ENCODE measurements at regions of chr1 and their contacts with region 1.

Region 1: GRCh38 chr1:208029381-208030287 is 118.7 kb upstream of the CD34 start:
- DNase-seq: no peak
- H3K4me3 ChIP-seq: no peak overlapping the region
- H3K4me3 Mint-ChIP-seq: no peak overlapping the region
- H3K27ac ChIP-seq: no peak overlapping the region
- H3K27ac Mint-ChIP-seq: no peak overlapping the region
- H3K4me1 ChIP-seq: no peaks in the 10 kb centered on the region
- H3K4me1 Mint-ChIP-seq: no peaks in the 10 kb centered on the region
- H3K27me3 ChIP-seq: no peaks in the 10 kb centered on the region
- H3K27me3 Mint-ChIP-seq: peaks cover 0 to 2% (median 0%) of the 10 kb centered on the region in 3 donors
- CTCF ChIP-seq: no peak

Region 2: DNA sequence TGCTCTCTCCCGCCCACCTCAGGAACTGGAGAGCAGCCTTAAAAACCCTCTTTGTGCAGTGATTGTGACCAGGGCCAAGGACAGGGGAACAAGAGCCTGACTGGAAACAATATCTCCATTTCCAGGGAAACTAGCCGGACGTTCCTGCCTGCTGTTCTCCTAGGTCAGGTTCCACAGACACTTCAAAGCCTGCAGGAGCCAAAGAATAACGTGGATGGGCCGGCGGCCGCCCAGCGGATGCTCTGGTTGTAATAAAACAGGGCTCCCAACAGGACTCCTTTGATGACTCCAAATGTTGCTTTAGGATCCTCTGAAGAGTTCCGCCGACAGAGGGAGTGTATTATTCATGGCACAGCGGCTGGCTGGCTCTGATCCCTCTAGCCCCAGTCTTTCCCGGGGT is 52.3 kb after region 1 on chr1:
- intact Hi-C with region 1: no loop called
- DNase-seq: no peak
- H3K4me3 ChIP-seq: no peak overlapping the region
- H3K4me3 Mint-ChIP-seq: no peak overlapping the region
- H3K27ac ChIP-seq: no peak overlapping the region
- H3K27ac Mint-ChIP-seq: peak overlapping the region in 1 of 7 donors; percentile 61
- H3K4me1 ChIP-seq: peaks cover 7 to 11% of the 10 kb centered on the region in 2 donors
- H3K4me1 Mint-ChIP-seq: peaks cover 17% of the 10 kb centered on the region
- H3K27me3 ChIP-seq: no peaks in the 10 kb centered on the region
- H3K27me3 Mint-ChIP-seq: peaks cover 1 to 6% (median 3%) of the 10 kb centered on the region in 3 donors
- CTCF ChIP-seq: no peak

Region 3: GRCh38 chr1:208093754-208094719 is 64.4 kb after region 1 on chr1:
- intact Hi-C with region 1: loop called in 1 of 2 experiments (anchors 10 kb)
- DNase-seq: peak; percentile 33 to 62 (median 50)
- H3K4me3 ChIP-seq: no peak overlapping the region
- H3K4me3 Mint-ChIP-seq: no peak overlapping the region
- H3K27ac ChIP-seq: no peak overlapping the region
- H3K27ac Mint-ChIP-seq: peak overlapping the region in 3 of 7 donors; percentile 13 to 47 (median 30)
- H3K4me1 ChIP-seq: no peaks in the 10 kb centered on the region
- H3K4me1 Mint-ChIP-seq: no peaks in the 10 kb centered on the region
- H3K27me3 ChIP-seq: no peaks in the 10 kb centered on the region
- H3K27me3 Mint-ChIP-seq: peaks cover 0 to 6% (median 3%) of the 10 kb centered on the region in 3 donors
- CTCF ChIP-seq: peak; percentile 83

Measured in CD14-positive monocyte (primary cell).